Endothelial cell of umbilical vein (primary cell): ENCODE measurements at regions of chr5 and their contacts with region 1.

Region 1: GRCh38 chr5:19928562-19929421 is 59.2 kb downstream of the CDH18 start:
- DNase-seq: peak; percentile 89
- H3K4me3 ChIP-seq: no peak overlapping the region
- H3K27ac ChIP-seq: peak overlapping the region; percentile 63
- H3K4me1 ChIP-seq: peaks cover 14% of the 10 kb centered on the region
- H3K27me3 ChIP-seq: no peaks in the 10 kb centered on the region
- CTCF ChIP-seq: no peak
- POLR2A ChIP-seq: no peak

Region 2: DNA sequence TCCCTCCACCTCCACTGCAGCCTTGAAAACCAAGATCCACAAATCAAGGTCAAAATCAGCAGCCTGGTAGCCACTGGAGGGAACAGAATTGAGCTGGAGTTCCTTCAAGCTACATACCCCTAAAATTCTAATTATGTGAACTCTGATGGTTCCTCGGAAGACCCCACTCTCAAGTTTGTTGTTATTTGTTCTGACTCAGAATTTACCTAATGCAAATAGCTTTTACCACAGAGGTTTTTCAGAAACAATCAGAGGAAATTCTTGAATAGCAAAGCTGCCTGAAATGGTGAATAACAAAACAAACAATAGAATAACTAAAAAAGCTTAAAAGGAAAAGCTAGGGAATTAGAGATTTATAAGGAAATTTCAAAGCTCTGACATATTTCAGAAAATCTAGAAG is 160.8 kb before region 1 on chr5:
- CTCF ChIA-PET with region 1: no interaction called
- POLR2A ChIA-PET with region 1: no interaction called
- dilution Hi-C with region 1: no loop called
- intact Hi-C with region 1: loop called (anchors 5 kb)
- DNase-seq: peak; percentile 78
- H3K4me3 ChIP-seq: no peak overlapping the region
- H3K27ac ChIP-seq: peak overlapping the region; percentile 62
- H3K4me1 ChIP-seq: peaks cover 51% of the 10 kb centered on the region
- H3K27me3 ChIP-seq: no peaks in the 10 kb centered on the region
- CTCF ChIP-seq: no peak
- POLR2A ChIP-seq: no peak

Region 3: DNA sequence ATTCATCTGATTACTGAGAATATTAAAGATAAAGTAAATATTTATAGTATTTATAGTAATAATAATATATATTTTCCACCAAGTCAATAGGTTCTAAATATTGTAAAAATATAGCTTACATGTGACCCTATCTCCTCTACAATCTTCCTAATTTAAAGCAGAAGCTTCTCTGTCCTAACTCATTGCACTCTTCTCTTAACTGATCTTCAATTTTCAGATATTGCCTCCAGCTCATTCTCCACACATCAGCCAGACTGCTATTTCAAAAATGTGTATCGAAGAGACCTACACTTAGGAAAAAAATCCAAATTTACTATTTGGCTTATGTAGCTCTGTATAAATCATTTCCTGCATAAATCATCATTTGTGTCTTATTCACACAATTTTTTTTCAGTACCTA is 11.4 kb after region 1 on chr5:
- CTCF ChIA-PET with region 1: no interaction called
- POLR2A ChIA-PET with region 1: no interaction called
- dilution Hi-C with region 1: no loop called
- intact Hi-C with region 1: no loop called
- DNase-seq: no peak
- H3K4me3 ChIP-seq: no peak overlapping the region
- H3K27ac ChIP-seq: no peak overlapping the region
- H3K4me1 ChIP-seq: no peaks in the 10 kb centered on the region
- H3K27me3 ChIP-seq: no peaks in the 10 kb centered on the region
- CTCF ChIP-seq: no peak
- POLR2A ChIP-seq: no peak